ENCODE measurements at regions of chr17 and their contacts with region 1.

Region 1: DNA sequence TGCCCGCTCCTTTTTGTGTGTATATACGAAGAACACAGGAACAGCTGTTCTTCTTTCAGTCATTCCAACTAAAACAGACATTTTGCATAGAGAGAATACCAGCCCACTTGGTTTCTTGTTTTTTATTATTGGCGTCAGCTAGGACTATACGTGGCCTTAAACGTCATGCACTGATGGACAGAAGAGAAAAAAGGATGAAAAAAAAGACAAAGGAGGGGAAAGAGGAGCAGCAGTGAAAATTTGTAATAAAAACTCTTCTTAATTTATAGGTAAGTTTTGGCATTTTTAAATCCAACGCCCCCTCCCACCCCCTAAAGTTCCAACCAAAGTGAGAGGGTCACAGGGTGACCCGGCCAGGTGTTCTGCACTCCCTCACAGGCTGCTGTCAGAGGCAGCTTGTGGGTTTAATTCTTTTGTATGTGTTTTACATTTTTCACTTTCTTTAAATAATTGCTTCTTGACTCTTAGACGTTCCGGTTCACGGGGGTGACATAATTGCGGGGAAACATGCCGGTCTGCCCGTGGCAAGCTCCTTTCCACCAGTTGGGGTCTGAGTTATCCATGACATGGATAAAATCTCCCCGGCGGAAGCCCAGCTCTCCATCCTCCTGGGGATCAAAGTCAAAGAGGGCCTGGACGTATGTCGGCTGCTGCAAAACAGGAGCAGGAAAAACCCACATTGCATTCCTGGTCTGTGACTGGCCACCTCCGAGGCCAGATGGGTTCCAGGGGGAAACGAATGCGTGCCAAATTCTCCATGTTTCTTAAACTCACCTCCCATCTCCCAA is 30.9 kb upstream of the SLC25A19 start:
- DNase-seq: no peak
- ATAC-seq: peak; percentile 53
- H3K4me3 Mint-ChIP-seq: peak overlapping the region; percentile 70
- H3K27ac Mint-ChIP-seq: peak overlapping the region; percentile 93
- H3K4me1 Mint-ChIP-seq: peaks cover 87% of the 10 kb centered on the region
- H3K27me3 Mint-ChIP-seq: no peaks in the 10 kb centered on the region
- CTCF ChIP-seq: no peak

Region 2: GRCh38 chr17:74776044-74776977 is 543.8 kb before region 1 on chr17 and contains the start of gene NAT9:
- CTCF ChIA-PET with region 1: no interaction called
- POLR2A ChIA-PET with region 1: interaction called, 10 read pairs
- intact Hi-C with region 1: no loop called
- DNase-seq: peak; percentile 99
- ATAC-seq: peak; percentile 82
- H3K4me3 Mint-ChIP-seq: peak within 1 kb of the TSS; percentile 99
- H3K27ac Mint-ChIP-seq: peak within 1 kb of the TSS; percentile 89
- H3K4me1 Mint-ChIP-seq: peaks cover 61% of the 10 kb centered on the region
- H3K27me3 Mint-ChIP-seq: no peaks in the 10 kb centered on the region
- CTCF ChIP-seq: no peak
- total RNA-seq, gene NAT9: 59.4 and 79.7 TPM in 2 replicates

Region 3: GRCh38 chr17:75338335-75338734 is 18.2 kb after region 1 on chr17:
- CTCF ChIA-PET with region 1: interaction called, 15 read pairs
- POLR2A ChIA-PET with region 1: interaction called, 96 read pairs
- intact Hi-C with region 1: no loop called
- DNase-seq: no peak
- ATAC-seq: peak; percentile 19
- H3K4me3 Mint-ChIP-seq: peak overlapping the region; percentile 62
- H3K27ac Mint-ChIP-seq: peak overlapping the region; percentile 84
- H3K4me1 Mint-ChIP-seq: peaks cover 89% of the 10 kb centered on the region
- H3K27me3 Mint-ChIP-seq: no peaks in the 10 kb centered on the region
- CTCF ChIP-seq: no peak

Region 4: DNA sequence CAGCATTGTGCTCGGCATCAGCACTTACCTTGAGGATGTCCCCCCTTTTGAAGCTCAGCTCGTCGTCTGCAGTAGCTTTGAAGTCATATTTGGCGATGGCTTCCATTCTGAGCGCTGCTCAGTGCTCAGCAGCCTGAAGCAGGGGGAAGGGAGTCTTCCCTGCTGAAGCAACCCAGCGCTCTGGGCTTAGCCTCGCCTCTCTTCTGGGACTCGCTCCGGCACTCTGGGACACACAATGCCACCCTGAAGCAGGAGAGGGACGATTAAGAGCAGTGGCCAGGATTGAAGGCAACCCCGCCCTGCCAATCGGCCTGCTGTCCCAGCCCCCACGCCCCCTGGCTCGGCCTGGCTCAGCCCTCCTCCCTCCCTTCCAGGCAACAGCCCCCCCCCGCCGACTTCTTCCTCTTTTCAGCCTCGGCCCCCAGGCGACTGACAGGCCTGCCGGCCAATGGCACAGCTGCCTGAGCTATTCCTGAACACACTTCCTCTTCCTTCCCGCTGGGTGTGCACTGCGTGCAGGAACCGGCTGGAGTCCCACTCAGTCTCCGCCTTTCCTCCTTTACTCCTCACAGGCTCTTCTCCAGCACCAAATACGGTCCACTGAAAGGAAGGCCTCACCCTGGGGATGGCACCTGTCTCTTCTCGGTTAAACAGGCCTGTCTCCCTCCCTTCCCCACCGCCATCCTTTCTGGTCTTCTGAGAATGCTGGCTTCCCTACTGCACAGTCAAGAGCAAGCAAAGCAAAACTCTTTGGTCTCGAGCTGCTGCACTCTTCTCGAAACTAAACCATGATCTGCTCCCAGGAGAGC is 73.6 kb after region 1 on chr17:
- CTCF ChIA-PET with region 1: interaction called, 25 read pairs
- POLR2A ChIA-PET with region 1: interaction called, 27 read pairs
- intact Hi-C with region 1: no loop called
- DNase-seq: peak; percentile 84
- ATAC-seq: peak; percentile 96
- H3K4me3 Mint-ChIP-seq: peak overlapping the region; percentile 92
- H3K27ac Mint-ChIP-seq: peak overlapping the region; percentile 88
- H3K4me1 Mint-ChIP-seq: peaks cover 84% of the 10 kb centered on the region
- H3K27me3 Mint-ChIP-seq: no peaks in the 10 kb centered on the region
- CTCF ChIP-seq: no peak

Region 5: GRCh38 chr17:75412455-75413317 is 92.6 kb after region 1 on chr17:
- CTCF ChIA-PET with region 1: interaction called, 53 read pairs
- POLR2A ChIA-PET with region 1: interaction called, 101 read pairs
- intact Hi-C with region 1: loop called (anchors 1 kb)
- DNase-seq: peak; percentile 63
- ATAC-seq: peak; percentile 94
- H3K4me3 Mint-ChIP-seq: peak overlapping the region; percentile 53
- H3K27ac Mint-ChIP-seq: peak overlapping the region; percentile 63
- H3K4me1 Mint-ChIP-seq: peaks cover 12% of the 10 kb centered on the region
- H3K27me3 Mint-ChIP-seq: no peaks in the 10 kb centered on the region
- CTCF ChIP-seq: peak; percentile 9